Psoas muscle (tissue), 8 donors: ENCODE measurements at regions of chr14 and their contacts with region 1.

Region 1: GRCh38 chr14:75188520-75189268 is 12.3 kb upstream of the TMED10 start:
- DNase-seq: no peak
- ATAC-seq: peak in 1 of 4 donors; percentile 33
- H3K4me3 ChIP-seq: no peak overlapping the region
- H3K27ac ChIP-seq: no peak overlapping the region
- H3K4me1 ChIP-seq: no peaks in the 10 kb centered on the region
- H3K27me3 ChIP-seq: no peaks in the 10 kb centered on the region
- CTCF ChIP-seq: no peak

Region 2: GRCh38 chr14:75123993-75124392 is 64.7 kb before region 1 on chr14:
- intact Hi-C with region 1: no loop called
- DNase-seq: no peak
- ATAC-seq: peak in 3 of 4 donors; percentile 10 to 28 (median 14)
- H3K4me3 ChIP-seq: no peak overlapping the region
- H3K27ac ChIP-seq: peak overlapping the region; percentile 62
- H3K4me1 ChIP-seq: peaks cover 39% of the 10 kb centered on the region
- H3K27me3 ChIP-seq: no peaks in the 10 kb centered on the region
- CTCF ChIP-seq: no peak

Region 3: DNA sequence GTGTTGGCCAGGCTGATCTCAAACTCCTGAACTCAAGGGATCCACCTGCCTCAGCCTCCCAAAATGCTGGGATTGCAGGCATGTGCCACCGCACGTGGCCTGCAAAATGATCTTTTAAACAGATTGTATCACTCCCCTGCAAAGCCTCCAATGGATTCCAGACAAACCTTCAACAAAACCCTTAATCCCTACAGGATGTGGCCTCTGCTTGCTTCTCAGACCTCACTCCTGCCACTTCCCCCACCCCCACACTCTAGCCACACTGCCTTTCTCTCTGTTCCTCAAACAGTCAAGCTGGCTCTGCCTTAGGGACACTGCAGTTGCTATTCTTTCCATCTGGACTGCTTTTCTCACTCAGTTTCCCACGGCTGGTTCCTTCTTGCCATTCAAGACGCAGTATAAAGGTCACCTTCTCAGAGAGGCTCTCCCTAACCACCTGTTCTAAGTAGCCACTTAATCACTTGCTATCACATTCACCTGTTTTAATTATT is 35.0 kb after region 1 on chr14:
- intact Hi-C with region 1: loop called in 1 of 2 experiments (anchors 5 kb)
- DNase-seq: no peak
- ATAC-seq: peak in 2 of 4 donors; percentile 45
- H3K4me3 ChIP-seq: no peak overlapping the region
- H3K27ac ChIP-seq: no peak overlapping the region
- H3K4me1 ChIP-seq: peaks cover 6% of the 10 kb centered on the region
- H3K27me3 ChIP-seq: no peaks in the 10 kb centered on the region
- CTCF ChIP-seq: no peak